Cardiac septum (tissue), 1 donor: ENCODE measurements at regions of chr1 and their contacts with region 1.

Region 1: DNA sequence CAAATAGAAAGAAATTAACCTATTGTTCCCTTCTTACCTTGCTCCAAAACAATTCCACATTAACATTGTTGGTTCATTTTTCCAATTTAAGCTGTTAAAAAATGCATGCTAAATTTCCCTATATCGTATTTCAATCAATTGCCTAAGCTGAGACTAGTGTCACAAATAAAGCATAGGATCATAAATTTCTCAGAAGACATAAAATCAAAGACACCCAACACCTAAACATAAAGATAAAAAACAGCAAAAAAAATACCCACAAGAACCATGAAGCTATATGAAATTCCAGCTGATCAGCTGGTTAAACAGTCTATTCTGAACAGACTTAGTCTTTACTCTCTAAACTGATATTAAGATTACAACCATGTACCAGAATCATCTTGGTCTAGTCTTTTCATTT is 32.3 kb downstream of the ACBD6 start:
- DNase-seq: no peak

Region 2: DNA sequence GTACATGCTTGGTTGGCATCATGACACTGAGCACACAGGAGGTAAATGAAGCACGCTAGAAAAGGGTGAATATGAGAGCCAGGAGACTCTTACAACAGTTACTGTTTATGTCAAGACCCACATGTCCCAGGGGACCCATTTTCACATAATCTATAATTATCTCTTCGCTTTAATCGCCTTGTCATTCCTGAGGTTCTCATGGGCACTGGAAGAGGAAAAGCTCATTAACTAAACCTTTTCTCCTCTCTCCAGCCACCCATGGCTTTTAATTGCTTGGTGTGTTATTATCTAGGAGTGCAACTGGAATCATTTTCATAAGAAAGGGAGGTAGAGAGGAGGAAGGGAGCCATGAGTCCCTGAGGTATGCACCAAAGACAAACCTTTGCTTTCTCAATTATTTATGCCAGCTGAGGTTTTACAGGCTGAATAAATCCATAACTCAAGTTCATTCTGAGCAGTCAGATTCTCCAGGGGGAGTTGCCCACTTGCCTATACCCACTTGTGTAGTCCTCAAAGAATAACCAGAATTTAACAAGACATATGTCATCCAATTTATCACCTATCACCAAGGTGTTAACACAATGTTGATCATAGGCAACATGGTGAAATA is 45.1 kb before region 1 on chr1:
- intact Hi-C with region 1: loop called (anchors 5 kb)
- DNase-seq: no peak

Region 3: GRCh38 chr1:180435566-180435965 is 34.5 kb before region 1 on chr1:
- intact Hi-C with region 1: no loop called
- DNase-seq: no peak